Naive thymus-derived CD8-positive, alpha-beta T cell (primary cell): ENCODE measurements at regions of chr14 and their contacts with region 1.

Region 1: DNA sequence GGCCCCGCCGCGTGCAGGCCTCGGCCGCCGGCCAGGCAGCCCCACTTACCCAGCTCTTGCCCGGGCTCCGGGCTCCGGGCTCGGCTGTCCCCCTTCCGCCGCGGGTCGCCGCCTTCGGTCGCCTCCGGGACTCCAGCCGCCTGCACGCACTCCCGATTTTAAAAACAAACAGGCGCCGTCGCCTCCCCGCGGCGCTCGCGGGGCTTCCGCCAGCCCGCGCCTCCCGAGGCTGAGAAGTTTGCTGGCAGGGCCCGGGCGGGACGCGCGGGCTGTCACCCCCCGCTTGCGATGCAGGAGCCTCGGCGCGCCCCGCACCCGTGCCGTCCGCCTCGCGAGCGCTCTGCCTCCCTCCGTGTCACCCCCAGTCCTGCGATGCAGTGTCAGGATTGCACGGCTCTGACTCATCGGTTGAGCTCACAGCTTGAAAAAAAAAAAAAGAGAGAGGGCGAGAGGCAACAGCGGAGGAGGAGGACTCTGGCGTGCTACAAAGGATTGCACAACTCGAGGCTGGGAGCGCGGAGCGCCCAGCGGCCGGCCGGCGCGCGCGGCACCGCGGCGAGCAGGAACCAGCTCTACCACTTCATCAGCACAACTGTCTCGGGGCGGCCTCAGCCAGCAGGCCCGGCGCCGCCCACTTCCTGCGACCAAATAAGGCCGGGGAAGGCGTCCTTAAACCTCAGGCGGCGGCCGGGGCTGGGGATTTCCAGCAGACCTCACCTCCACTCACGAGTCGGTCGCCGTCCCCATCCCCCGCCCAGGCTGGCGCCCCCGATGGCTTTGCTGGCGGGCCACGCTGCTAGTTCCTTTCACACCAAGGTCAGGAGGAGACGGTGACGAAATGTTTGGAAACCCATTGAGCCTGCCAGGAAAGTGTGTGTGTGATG is 45.8 kb upstream of the PNMA1 start:
- DNase-seq: peak; percentile 94 to 98 (median 96)
- ATAC-seq: peak; percentile 80 to 85
- H3K4me3 Mint-ChIP-seq: peak overlapping the region; percentile 82 to 92 (median 90)
- H3K27ac Mint-ChIP-seq: peak overlapping the region; percentile 95 to 99 (median 98)
- H3K4me1 Mint-ChIP-seq: peaks cover 50 to 84% (median 80%) of the 10 kb centered on the region in 4 donors
- H3K27me3 Mint-ChIP-seq: no peaks in the 10 kb centered on the region

Region 2: GRCh38 chr14:73713803-73714655 is 45.9 kb before region 1 on chr14 and contains the start of gene PNMA1:
- POLR2A ChIA-PET with region 1: interaction called, 35 read pairs
- DNase-seq: peak; percentile 79 to 93 (median 87)
- ATAC-seq: peak; percentile 75 to 77
- H3K4me3 Mint-ChIP-seq: peak within 1 kb of the TSS; percentile 88 to 98 (median 94)
- H3K27ac Mint-ChIP-seq: peak within 1 kb of the TSS; percentile 93 to 99 (median 96)
- H3K4me1 Mint-ChIP-seq: peaks cover 25 to 34% (median 28%) of the 10 kb centered on the region in 4 donors
- H3K27me3 Mint-ChIP-seq: no peaks in the 10 kb centered on the region
- polyA plus RNA-seq, gene PNMA1: 31.6 to 37.2 (median 37.2) TPM

Region 3: DNA sequence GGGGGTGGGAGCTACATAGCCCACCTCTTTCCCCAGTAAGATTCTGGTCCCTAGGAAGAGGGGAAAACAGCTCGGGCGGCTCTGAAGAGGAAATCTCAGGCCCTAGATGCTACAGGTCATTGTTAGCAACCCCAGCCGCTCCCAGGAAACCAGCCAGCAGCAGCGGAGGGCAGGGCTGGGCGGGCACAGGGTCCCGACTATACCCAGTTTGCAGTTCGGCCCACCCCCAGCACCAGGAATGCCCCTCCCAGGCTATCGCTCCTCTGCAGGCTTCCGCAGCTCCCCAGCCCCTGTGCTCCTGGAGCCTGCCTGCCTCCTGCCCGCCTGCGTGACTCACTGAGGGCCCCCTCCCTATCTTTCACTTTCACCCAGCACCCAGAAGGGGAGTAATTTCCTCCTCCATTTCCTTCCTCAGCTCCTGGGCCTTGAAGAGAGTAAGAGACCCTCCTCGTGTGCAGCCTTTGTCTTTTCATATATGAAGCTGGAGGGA is 18.5 kb before region 1 on chr14:
- POLR2A ChIA-PET with region 1: interaction called, 330 read pairs
- DNase-seq: peak; percentile 38 to 76 (median 59)
- ATAC-seq: peak; percentile 71 to 72
- H3K4me3 Mint-ChIP-seq: peak overlapping the region; percentile 81 to 94 (median 89)
- H3K27ac Mint-ChIP-seq: peak overlapping the region; percentile 92 to 98 (median 97)
- H3K4me1 Mint-ChIP-seq: peaks cover 38 to 85% (median 72%) of the 10 kb centered on the region in 4 donors
- H3K27me3 Mint-ChIP-seq: no peaks in the 10 kb centered on the region

Region 4: DNA sequence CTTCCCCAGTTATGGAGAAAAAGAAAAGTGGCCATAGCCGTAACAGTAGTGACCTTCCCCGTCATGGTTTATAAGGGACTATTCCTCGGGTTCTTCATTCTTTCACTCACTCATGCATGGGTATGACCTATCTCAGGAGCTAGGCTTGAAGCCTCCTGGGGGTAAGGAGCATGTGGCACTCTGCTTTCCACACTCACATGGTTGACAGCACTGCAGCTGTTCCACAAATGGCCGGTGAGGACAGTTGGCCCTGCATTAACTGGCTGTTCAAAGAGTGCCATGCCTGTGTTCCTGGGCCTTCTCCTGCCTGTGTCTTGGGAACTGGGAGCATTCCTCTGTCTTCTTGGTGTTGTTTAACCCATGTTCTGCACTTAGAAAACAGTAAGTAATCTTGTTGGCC is 20.4 kb after region 1 on chr14:
- POLR2A ChIA-PET with region 1: interaction called, 387 read pairs
- DNase-seq: no peak
- ATAC-seq: no peak
- H3K4me3 Mint-ChIP-seq: no peak overlapping the region
- H3K27ac Mint-ChIP-seq: peak overlapping the region in 5 of 10 donors; percentile 27 to 77 (median 40)
- H3K4me1 Mint-ChIP-seq: peaks cover 36 to 80% (median 71%) of the 10 kb centered on the region in 4 donors
- H3K27me3 Mint-ChIP-seq: no peaks in the 10 kb centered on the region

Region 5: GRCh38 chr14:73795972-73796371 is 36.0 kb after region 1 on chr14:
- POLR2A ChIA-PET with region 1: interaction called, 387 read pairs
- DNase-seq: no peak
- ATAC-seq: no peak
- H3K4me3 Mint-ChIP-seq: no peak overlapping the region
- H3K27ac Mint-ChIP-seq: no peak overlapping the region
- H3K4me1 Mint-ChIP-seq: peaks cover 0 to 3% (median 2%) of the 10 kb centered on the region in 4 donors
- H3K27me3 Mint-ChIP-seq: no peaks in the 10 kb centered on the region

Region 6: GRCh38 chr14:73851644-73852382 is 91.9 kb after region 1 on chr14 and contains the start of gene PTGR2:
- POLR2A ChIA-PET with region 1: interaction called, 13 read pairs
- DNase-seq: peak; percentile 85 to 97 (median 92)
- ATAC-seq: peak; percentile 92 to 96
- H3K4me3 Mint-ChIP-seq: peak within 1 kb of the TSS; percentile 89 to 98 (median 98)
- H3K27ac Mint-ChIP-seq: peak within 1 kb of the TSS; percentile 92 to 100 (median 99)
- H3K4me1 Mint-ChIP-seq: peaks cover 18 to 26% (median 19%) of the 10 kb centered on the region in 4 donors
- H3K27me3 Mint-ChIP-seq: no peaks in the 10 kb centered on the region
- polyA plus RNA-seq, gene PTGR2: 4.4 to 5.9 (median 5.1) TPM